ENCODE measurements at regions of chr12 and their contacts with region 1.

Region 1: DNA sequence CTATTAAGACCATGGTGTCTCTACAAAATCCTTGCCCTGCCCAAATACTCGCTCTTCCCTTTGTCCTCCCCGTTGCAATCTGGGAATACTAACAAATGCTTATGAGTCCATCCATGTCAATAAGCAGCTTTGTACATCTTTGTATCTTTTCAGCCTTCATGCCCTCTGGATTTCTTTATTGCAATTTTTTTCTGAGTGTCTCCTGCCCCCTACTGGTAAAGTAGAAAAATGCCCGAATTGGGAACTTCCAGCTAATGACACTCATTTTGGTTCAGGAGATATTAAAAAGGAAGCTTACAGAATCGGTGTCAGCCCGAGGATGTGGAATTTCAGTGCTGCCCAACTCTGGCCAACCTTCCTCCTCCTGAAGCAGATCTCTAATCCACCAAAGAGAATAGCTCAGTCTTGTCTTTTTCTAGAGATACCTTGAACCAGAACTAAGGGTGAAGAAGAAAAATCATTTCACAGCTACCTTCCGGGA is 46.0 kb downstream of the SH2B3 start:
- DNase-seq: peak in 2 of 5 donors; percentile 58 to 66
- H3K4me3 ChIP-seq: no peak overlapping the region
- H3K27ac ChIP-seq: no peak overlapping the region
- H3K4me1 ChIP-seq: peaks cover 0 to 33% (median 12%) of the 10 kb centered on the region in 3 donors
- H3K27me3 ChIP-seq: no peaks in the 10 kb centered on the region
- CTCF ChIP-seq: peak; percentile 66

Region 2: DNA sequence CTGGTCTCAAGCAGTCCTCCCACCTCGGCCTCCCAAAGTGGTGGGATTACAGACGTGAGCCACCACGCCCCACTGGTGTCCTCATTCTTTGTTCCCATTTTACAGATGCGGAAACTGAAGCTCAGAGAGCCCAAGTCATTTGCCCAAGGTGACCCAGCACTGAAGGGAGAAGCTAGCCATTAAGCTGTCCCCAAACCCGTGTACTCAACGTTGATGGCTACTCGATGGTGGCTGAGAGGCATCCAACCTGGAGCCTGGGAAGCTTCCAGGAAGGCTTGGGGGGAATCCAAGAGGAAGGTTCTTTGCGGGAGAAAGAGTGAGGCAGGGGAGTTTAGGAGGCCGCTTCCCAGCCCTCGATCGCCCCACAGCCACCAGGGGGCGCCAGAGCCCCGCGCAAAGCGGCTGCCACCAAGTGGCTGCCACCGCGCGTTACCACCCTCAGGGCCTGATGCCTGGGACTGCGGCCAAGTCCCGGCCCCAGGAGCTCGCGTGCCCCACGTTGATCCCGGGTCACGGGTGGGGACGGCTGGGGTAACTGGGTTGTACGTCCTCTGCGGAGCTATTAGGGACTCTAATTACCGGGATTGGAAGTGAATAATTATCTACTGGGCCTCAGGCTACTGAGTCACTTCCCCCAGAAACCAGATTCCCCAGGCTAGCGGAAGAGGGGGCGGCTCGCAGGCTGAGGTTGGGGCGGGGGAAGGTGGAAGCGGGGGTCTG is 54.8 kb before region 1 on chr12:
- intact Hi-C with region 1: loop called (anchors 5 kb)
- DNase-seq: peak; percentile 85 to 97 (median 88)
- H3K4me3 ChIP-seq: no peak overlapping the region
- H3K27ac ChIP-seq: peak overlapping the region in 1 of 2 donors; percentile 1
- H3K4me1 ChIP-seq: peaks cover 0 to 5% (median 0%) of the 10 kb centered on the region in 3 donors
- H3K27me3 ChIP-seq: no peaks in the 10 kb centered on the region
- CTCF ChIP-seq: peak; percentile 98

Measured in kidney (tissue), 22 donors.